Activated naive CD4-positive, alpha-beta T cell treated with anti-CD3 and anti-CD28 coated beads, Interleukin-2, amount 10 ng/mL, durations not matched to agents 7 days and 5 days (primary cell): ENCODE measurements at regions of chr3 and their contacts with region 1.

Region 1: DNA sequence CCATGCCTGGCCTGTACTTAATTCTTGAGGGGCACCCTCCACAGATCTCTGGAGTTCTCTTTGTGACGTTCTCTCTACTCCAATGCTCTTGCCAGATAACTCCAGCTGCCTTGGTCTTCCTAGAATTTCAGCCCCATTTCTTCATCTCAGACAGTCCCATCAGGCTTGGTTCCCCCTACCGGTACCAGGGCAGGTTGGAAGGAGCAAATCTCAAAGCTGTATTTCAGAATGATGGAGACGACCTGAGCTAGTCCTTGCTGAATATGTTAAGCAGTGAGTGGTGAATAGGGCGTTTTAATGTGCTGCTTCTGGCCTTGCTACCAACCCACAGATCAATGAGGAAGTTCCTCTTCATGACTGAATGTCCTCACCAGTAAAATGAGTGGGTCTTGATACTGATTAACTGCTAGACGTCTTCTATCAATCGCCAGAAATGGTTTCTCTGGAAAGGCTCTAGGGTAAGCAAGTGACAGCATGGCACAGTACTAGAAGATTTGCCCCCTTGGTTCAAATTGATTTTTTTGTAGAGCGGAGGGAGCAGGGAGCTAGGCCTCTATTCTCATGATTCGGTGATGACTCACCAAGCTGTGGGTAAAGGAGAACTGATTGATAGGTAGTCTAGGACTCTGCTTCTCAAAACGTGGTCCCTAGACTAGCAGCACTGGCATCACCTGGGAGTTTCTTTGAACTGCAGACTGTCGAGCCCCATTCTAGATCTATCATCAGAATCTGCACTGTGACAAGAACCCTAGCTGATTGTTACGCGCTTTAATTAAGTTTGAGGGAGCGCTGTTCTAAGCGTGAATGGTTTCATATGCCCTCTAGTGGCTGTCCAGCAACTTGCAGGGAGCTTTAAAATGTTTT is 67.8 kb downstream of the UBP1 start:
- DNase-seq: peak; percentile 64
- H3K4me3 Mint-ChIP-seq: no peak overlapping the region
- H3K27ac Mint-ChIP-seq: no peak overlapping the region
- H3K4me1 Mint-ChIP-seq: no peaks in the 10 kb centered on the region
- H3K27me3 Mint-ChIP-seq: peaks cover 13% of the 10 kb centered on the region

Region 2: DNA sequence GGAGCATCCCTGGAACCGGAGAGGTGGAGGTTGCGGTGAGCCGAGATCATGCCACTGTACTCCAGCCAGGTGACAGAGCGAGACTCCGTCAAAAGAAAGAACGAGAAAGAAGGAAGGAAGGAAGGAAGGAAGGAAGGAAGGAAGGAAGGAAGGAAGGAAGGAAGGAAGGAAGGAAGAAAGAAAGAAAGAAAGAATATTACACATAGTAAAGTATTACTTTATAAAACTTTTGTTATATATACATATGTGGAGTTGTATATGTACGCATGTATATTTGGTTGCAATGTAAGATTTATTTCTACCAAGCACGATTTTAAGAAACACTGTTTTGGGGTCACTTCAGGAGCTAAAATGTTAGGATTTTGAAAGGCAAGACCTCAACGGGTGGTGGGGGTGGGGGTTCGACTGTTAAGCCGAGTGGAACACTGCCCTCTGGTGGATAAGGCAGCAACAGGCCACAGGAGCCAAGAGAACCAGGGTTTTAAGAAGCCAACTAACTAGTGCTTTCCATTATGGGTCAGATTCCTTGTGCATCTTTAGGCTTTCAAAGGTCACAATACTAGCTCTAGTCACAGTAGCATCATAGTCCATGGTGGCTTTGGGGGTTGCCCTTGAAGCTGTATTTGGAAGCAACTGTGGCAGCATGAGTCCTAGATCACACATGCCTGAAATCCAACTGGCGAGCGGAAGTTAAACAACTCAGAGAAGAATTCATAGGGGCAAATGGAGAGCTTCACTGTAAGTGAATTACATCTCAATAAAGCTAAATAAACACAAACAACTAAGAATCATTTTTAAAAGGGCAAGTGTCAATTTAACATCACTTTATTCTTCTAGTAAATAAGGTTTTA is 298.0 kb before region 1 on chr3:
- CTCF ChIA-PET with region 1: interaction called, 16 read pairs
- DNase-seq: peak; percentile 79
- H3K4me3 Mint-ChIP-seq: no peak overlapping the region
- H3K27ac Mint-ChIP-seq: no peak overlapping the region
- H3K4me1 Mint-ChIP-seq: peaks cover 44% of the 10 kb centered on the region
- H3K27me3 Mint-ChIP-seq: no peaks in the 10 kb centered on the region

Region 3: DNA sequence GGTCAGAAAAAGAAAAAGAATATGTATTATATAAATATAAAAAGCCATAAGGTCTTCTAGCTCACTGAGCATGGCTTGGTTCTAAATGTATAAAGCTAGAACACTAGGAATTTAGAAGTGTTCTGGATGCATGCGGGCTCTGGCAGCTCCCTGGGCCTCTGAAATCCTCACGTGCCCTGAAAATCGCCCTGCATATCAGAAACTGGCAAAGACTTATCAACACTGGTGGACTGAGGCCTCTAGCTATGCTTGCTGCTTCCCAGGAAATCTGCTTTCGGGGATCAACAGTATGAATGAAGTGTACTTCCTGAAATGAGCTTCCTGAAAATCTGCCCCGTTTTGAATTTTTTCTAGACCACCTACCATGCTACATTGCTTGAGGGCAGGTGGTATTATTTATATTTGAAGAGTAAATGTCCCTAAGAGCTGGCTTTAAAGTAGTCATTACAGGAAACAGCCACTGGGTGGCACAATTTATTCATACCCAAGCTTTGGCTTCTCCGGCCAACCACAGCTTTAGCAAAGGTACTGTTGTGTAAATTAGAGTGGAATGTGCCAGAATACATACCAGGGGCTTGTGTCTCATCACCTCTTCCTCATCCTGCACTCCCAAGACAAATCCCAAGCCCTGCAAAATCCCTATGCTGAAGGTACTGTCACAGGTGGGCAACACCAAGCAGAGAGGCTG is 241.0 kb before region 1 on chr3:
- CTCF ChIA-PET with region 1: interaction called, 97 read pairs
- DNase-seq: peak; percentile 54
- H3K4me3 Mint-ChIP-seq: no peak overlapping the region
- H3K27ac Mint-ChIP-seq: no peak overlapping the region
- H3K4me1 Mint-ChIP-seq: peaks cover 12% of the 10 kb centered on the region
- H3K27me3 Mint-ChIP-seq: no peaks in the 10 kb centered on the region

Region 4: DNA sequence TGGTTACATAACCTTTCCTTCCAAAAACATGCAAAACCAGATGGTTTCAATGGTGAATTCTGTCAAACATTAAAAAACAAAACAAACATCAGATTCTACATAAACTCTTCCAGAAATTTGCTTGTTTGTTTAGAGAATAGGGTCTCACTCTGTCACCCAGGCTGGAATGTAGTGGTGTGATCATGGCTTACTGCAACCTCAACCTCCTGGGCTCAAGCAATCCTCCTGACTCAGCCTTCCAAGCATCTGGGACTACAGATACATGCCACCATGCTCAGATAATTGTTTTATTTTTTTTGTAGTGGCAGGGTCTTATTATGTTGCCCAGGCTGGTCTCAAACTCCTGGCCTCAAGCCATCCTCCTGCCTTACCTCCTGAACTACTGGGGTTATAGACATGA is 59.1 kb before region 1 on chr3:
- CTCF ChIA-PET with region 1: no interaction called
- DNase-seq: no peak
- H3K4me3 Mint-ChIP-seq: no peak overlapping the region
- H3K27ac Mint-ChIP-seq: no peak overlapping the region
- H3K4me1 Mint-ChIP-seq: no peaks in the 10 kb centered on the region
- H3K27me3 Mint-ChIP-seq: peaks cover 20% of the 10 kb centered on the region

Region 5: DNA sequence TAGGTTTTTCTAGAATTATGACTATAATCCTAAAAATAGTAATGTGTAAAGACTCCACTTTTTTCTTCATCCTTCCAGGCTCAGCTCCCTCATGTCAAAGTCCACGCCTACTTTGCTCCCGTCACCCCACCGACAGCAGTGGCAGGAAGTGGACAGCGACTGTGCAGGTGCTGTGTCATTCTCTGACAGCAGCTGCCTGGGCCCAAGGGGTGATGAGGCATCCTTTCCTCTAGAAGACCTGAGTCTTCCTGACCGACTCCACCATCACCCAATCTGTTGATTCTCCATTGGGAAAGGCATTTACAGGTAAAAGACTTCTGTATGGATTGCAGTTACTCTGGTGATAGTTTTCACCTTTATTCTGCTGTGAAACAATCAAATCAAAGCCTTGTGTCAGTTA is 13.0 kb after region 1 on chr3:
- CTCF ChIA-PET with region 1: interaction called, 21 read pairs
- DNase-seq: peak; percentile 60
- H3K4me3 Mint-ChIP-seq: no peak overlapping the region
- H3K27ac Mint-ChIP-seq: no peak overlapping the region
- H3K4me1 Mint-ChIP-seq: peaks cover 16% of the 10 kb centered on the region
- H3K27me3 Mint-ChIP-seq: no peaks in the 10 kb centered on the region

Region 6: DNA sequence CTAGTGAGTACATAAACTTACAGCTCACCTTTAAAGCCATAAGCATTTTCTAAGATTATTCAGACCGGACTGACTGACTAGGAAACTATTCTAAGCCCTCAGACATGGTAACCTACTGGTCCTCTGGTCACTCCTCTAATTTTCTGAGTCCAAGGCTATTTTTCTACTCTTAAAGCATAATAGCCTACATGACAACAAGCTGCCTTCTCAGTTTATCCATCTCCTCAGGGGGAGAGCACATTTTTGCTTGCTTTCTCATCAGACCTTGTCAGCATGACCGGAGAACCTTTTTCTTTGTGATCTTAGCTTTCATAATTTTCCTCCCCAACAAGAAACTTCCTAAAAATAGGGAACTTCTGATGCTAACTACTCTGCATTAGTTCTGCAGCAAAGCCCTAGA is 29.3 kb after region 1 on chr3:
- CTCF ChIA-PET with region 1: interaction called, 10 read pairs
- DNase-seq: no peak
- H3K4me3 Mint-ChIP-seq: no peak overlapping the region
- H3K27ac Mint-ChIP-seq: no peak overlapping the region
- H3K4me1 Mint-ChIP-seq: no peaks in the 10 kb centered on the region
- H3K27me3 Mint-ChIP-seq: no peaks in the 10 kb centered on the region

Region 7: DNA sequence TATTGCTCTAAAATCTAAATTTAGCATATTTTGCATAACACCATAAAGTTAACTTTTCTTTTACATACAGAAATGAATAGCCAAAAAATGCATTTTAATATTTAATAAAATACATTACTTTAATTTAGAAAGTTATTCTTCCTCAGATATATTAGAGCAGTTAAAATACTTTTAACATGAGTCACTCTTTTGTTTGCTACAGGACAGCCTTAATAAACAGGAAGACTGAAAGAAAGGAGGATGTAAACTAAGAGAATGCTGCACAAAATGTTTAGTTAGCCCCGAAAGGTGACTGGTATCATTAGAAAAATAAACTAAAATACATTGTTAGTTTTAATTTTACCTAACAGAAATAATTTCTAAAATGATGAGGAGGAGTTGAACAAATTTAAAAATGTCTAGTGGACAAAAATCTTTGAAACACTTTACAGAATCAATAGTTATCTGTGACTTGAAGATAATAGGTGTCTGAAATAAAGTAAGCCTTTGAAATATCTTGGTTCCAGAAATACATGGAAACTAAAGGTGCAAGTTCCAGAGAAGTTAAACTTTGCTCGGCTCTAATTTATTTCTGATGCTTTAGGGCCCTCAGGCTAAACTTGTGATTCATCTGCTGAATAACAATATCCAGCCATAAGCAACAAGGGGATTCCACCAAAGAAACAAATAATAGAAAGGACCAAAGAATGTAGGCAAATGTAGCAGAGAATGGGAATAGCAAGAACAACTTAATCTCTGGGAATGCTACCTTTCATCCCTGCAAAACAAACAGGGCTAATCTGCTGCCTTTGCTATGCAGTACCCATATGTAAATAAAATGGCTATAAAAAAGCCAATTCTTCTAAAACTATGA is 206.1 kb after region 1 on chr3:
- CTCF ChIA-PET with region 1: no interaction called
- DNase-seq: no peak
- H3K4me3 Mint-ChIP-seq: no peak overlapping the region
- H3K27ac Mint-ChIP-seq: no peak overlapping the region
- H3K4me1 Mint-ChIP-seq: no peaks in the 10 kb centered on the region
- H3K27me3 Mint-ChIP-seq: no peaks in the 10 kb centered on the region

Region 8: DNA sequence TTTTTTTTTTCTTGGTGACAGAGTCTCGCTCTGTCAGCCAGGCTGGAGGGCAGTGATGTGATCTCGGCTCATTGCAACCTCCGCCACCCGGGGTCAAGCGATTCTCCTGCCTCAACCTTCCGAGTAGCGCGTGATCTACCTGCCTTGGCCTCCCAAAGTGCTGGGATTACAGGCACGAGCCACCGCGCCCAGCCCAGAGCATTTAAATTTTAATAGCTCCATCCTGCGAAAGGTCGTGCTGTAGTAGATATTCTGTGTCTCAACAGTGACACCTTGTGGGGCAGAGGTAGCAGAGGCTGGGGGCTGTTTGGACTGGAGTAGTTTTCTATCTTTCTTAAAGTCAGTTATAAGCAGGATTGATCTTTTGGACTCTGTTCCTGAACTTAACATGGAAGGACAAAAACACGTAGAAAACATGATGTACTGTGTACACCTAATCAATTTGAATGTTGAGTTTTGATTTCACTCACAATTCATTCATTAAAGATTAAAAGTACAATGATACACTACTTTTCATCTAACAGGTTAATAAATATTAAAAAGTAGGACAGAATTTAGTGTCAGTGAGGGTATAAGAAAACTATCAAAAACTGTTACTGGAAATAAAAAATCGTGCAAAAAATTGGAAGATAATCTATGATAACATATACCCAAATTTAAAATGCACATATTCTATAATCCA is 415.0 kb after region 1 on chr3:
- CTCF ChIA-PET with region 1: interaction called, 10 read pairs
- DNase-seq: peak; percentile 67
- H3K4me3 Mint-ChIP-seq: no peak overlapping the region
- H3K27ac Mint-ChIP-seq: no peak overlapping the region
- H3K4me1 Mint-ChIP-seq: peaks cover 4% of the 10 kb centered on the region
- H3K27me3 Mint-ChIP-seq: peaks cover 27% of the 10 kb centered on the region